Upper lobe of right lung (tissue), 1 donor: ENCODE measurements at regions of chr18 and their contacts with region 1.

Region 1: GRCh38 chr18:35580701-35581539 is 620 bp upstream of the GALNT1 start:
- DNase-seq: peak; percentile 84
- ATAC-seq: peak; percentile 88
- H3K4me3 ChIP-seq: peak overlapping the region; percentile 69
- H3K27ac ChIP-seq: peak overlapping the region; percentile 93
- H3K4me1 ChIP-seq: peaks cover 11% of the 10 kb centered on the region
- H3K27me3 ChIP-seq: no peaks in the 10 kb centered on the region
- CTCF ChIP-seq: no peak

Region 2: GRCh38 chr18:35282353-35282752 is 298.6 kb before region 1 on chr18:
- intact Hi-C with region 1: no loop called
- DNase-seq: no peak
- ATAC-seq: no peak
- H3K4me3 ChIP-seq: no peak overlapping the region
- H3K27ac ChIP-seq: no peak overlapping the region
- H3K4me1 ChIP-seq: no peaks in the 10 kb centered on the region
- H3K27me3 ChIP-seq: no peaks in the 10 kb centered on the region
- CTCF ChIP-seq: no peak

Region 3: DNA sequence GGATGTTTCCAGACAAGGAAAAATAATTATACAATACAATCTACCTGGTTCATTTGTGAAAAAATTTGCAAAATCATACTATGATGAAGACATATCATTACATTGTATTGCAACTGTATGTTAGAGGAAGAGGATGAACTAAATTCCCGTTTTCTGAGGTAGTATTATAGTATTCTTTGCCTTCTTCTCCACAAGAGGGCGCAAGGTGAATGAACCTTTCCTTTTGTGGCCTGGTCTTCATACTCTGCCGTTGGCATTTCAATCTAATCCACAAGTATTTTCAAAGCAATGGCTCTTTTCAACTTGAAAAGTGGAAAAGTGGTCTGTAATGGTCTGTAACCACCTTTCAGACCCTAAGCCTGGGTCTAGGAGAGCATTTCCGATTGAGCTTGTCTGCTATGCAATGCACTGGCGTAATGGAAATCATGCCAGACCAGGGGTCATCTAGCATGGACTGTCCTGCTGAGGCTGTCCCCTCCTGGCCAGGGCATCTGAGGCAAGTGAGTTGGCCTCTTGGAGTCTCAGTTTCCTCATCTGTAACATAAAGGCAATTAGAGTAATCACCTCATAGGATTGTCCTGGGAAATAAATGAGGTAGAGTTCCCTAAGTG is 172.9 kb before region 1 on chr18:
- intact Hi-C with region 1: loop called (anchors 10 kb)
- DNase-seq: no peak
- ATAC-seq: peak; percentile 92
- H3K4me3 ChIP-seq: no peak overlapping the region
- H3K27ac ChIP-seq: no peak overlapping the region
- H3K4me1 ChIP-seq: no peaks in the 10 kb centered on the region
- H3K27me3 ChIP-seq: no peaks in the 10 kb centered on the region
- CTCF ChIP-seq: peak; percentile 85